ENCODE measurements at regions of chr10 and their contacts with region 1.

Region 1: GRCh38 chr10:92886334-92886961 is 38.1 kb downstream of the EXOC6 start:
- DNase-seq: no peak
- ATAC-seq: peak; percentile 68
- H3K4me3 ChIP-seq: no peak overlapping the region
- H3K27ac ChIP-seq: no peak overlapping the region
- H3K4me1 ChIP-seq: no peaks in the 10 kb centered on the region
- H3K27me3 ChIP-seq: no peaks in the 10 kb centered on the region
- CTCF ChIP-seq: no peak
- EP300 ChIP-seq: no peak
- POLR2A ChIP-seq: no peak
- RAD21 ChIP-seq: no peak

Region 2: GRCh38 chr10:92901819-92902251 is 15.4 kb after region 1 on chr10:
- CTCF ChIA-PET with region 1: interaction called, 13 read pairs
- POLR2A ChIA-PET with region 1: no interaction called
- RAD21 ChIA-PET with region 1: interaction called, 3 read pairs
- SMC1A ChIA-PET with region 1: interaction called, 7 read pairs
- in situ Hi-C with region 1: no loop called
- intact Hi-C with region 1: no loop called
- DNase-seq: peak; percentile 56
- ATAC-seq: peak; percentile 97
- H3K4me3 ChIP-seq: no peak overlapping the region
- H3K27ac ChIP-seq: no peak overlapping the region
- H3K4me1 ChIP-seq: peaks cover 4% of the 10 kb centered on the region; the same call in 1 of the 2 replicates
- H3K27me3 ChIP-seq: no peaks in the 10 kb centered on the region
- CTCF ChIP-seq: no peak
- EP300 ChIP-seq: peak; percentile 49 to 66; a peak in 2 of 4 replicates
- POLR2A ChIP-seq: no peak
- RAD21 ChIP-seq: no peak

Region 3: GRCh38 chr10:92914478-92915325 is 28.3 kb after region 1 on chr10:
- CTCF ChIA-PET with region 1: interaction called, 10 read pairs
- POLR2A ChIA-PET with region 1: no interaction called
- RAD21 ChIA-PET with region 1: interaction called, 3 read pairs
- SMC1A ChIA-PET with region 1: interaction called, 4 read pairs
- in situ Hi-C with region 1: no loop called
- intact Hi-C with region 1: no loop called
- DNase-seq: no peak
- ATAC-seq: peak; percentile 98
- H3K4me3 ChIP-seq: no peak overlapping the region
- H3K27ac ChIP-seq: no peak overlapping the region
- H3K4me1 ChIP-seq: no peaks in the 10 kb centered on the region
- H3K27me3 ChIP-seq: no peaks in the 10 kb centered on the region
- CTCF ChIP-seq: peak; percentile 65 to 81 (median 75)
- EP300 ChIP-seq: no peak
- POLR2A ChIP-seq: no peak
- RAD21 ChIP-seq: peak; percentile 56